ENCODE measurements at regions of chr6 and their contacts with region 1.

Region 1: DNA sequence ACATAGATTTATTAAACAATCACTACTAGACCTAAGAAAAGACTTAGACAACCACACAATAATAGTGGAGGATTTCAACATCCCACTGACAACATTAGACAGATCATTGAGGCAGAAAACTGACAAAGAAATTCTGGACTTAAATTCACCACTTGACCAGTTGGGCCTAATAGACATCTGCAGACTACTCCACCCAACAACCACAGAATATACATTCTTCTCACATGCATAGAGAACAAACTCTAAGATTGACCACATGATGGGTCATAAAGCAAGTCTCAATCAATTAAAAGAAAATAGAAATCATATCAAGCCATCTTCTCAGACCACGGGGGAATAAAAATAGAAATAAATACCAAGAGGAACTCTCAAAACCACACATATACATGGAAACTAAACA is 136.7 kb upstream of the ARG1 start:
- DNase-seq: no peak
- H3K4me3 ChIP-seq: no peak overlapping the region
- H3K27ac ChIP-seq: no peak overlapping the region
- H3K4me1 ChIP-seq: no peaks in the 10 kb centered on the region
- H3K27me3 ChIP-seq: no peaks in the 10 kb centered on the region
- CTCF ChIP-seq: no peak
- EP300 ChIP-seq: no peak
- POLR2A ChIP-seq: no peak

Region 2: GRCh38 chr6:131400054-131400781 is 36.1 kb before region 1 on chr6:
- intact Hi-C with region 1: no loop called
- DNase-seq: no peak
- H3K4me3 ChIP-seq: no peak overlapping the region
- H3K27ac ChIP-seq: no peak overlapping the region
- H3K4me1 ChIP-seq: peaks cover 4% of the 10 kb centered on the region
- H3K27me3 ChIP-seq: no peaks in the 10 kb centered on the region
- CTCF ChIP-seq: no peak
- EP300 ChIP-seq: no peak
- POLR2A ChIP-seq: no peak

Region 3: DNA sequence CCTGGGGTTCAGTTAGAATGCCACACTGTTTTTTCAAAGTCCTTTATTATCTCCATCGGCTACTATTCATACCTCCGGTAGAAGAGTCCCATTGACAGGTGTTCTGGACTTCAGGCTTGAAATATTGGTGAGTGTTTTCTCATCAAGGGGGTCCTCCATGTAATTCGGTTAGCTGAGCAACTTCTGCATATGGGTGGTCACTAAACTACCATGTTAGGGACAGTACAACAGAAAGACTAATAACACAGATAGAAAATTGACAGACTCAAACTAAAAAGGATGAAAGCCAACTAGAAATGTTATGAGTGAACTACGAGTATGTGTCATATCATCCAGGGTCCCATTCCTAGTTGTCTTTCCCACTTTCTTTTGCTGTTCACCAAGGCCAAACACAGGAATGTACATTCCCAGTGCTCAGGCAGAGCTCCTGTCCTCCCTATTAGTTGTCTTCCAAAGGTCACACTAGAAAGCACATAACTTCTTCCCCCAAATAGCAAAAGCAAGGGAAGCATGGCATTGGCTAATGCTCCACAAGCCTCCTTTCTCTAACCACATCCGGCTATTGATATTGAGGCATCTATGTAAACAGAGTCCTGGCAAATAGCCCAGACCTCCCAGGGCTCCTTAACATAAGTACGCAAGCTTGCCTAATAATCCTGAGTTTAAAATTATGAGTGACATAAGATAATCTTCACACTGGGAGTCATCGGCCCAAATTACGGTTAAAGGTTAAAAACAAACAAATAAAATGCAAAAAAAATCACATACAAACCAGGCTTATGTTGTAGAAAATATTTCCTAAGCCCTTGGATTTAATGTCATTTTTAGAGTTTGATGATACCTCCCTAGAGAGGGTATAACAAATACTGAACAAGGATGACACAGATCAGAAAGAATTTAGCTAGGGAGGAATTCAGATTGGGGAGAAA is 501.6 kb after region 1 on chr6:
- intact Hi-C with region 1: loop called in 1 of 4 experiments (anchors 5 kb)
- DNase-seq: no peak
- H3K4me3 ChIP-seq: no peak overlapping the region
- H3K27ac ChIP-seq: no peak overlapping the region
- H3K4me1 ChIP-seq: peaks cover 4% of the 10 kb centered on the region
- H3K27me3 ChIP-seq: no peaks in the 10 kb centered on the region
- CTCF ChIP-seq: no peak
- EP300 ChIP-seq: no peak
- POLR2A ChIP-seq: no peak